Activated CD8-positive, alpha-beta T cell treated with anti-CD3 and anti-CD28 coated beads for 36 hours (primary cell): ENCODE measurements at regions of chr6 and their contacts with region 1.

Region 1: DNA sequence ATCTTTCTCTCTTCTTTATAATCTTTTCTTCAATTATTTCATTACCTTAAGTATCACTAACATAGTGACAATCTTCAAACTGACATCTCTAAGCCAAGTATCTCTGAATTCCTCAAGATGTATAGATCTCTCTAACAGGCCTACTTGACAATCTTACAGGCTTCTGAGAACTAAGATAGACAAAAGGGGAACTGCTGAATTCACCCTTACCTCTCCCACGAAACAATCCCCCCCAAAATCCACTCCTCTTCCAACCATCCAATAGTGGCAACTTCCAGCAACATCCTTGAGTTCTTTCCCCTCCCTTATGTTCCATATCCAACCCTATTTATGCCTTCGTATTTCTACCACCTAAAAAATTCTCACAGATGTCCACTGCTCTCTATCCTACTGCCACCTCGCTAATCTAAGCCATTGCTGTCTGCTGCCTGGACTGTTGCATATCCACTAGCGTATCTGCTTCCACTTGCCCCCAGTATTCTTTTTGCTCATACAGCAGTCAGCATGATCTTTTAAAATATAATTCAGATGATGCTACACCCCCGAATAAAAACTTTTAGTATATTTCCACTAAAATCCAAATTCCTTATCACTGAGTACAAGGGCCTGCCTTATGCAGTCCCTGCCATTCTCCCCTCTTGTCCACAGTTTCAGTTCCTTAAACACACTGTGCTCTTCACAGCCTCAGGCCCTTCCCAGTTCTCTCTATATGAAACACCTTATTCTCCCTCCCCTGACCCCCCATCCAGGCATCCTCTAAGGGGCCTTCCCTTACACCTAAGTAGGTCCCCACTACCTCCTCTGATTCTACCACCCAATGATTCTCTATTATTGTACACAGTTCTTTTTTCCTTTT is 8.0 kb downstream of the REPS1 start:
- DNase-seq: no peak
- ATAC-seq: no peak
- H3K4me3 Mint-ChIP-seq: no peak overlapping the region
- H3K27ac Mint-ChIP-seq: no peak overlapping the region
- H3K4me1 Mint-ChIP-seq: peaks cover 48% of the 10 kb centered on the region
- H3K27me3 Mint-ChIP-seq: no peaks in the 10 kb centered on the region
- CTCF ChIP-seq: no peak

Region 2: DNA sequence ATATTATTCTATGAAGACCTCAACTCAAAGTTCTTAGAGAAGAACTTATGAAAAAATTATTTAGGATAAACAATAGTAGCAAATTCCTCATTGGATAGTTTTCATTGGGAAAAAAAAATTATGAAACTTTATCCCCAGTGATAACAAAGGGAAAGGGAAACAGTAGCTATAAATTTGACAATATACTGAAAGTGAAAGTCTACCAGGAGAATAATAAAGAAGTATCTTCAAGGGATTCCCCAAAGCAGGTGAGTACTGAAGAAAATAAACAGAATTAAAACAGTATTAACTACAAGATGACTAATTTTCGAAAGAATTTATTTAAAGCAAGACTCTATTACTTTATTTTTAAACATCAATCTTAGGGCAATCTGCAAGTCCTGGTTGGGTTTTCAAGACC is 48.4 kb before region 1 on chr6:
- CTCF ChIA-PET with region 1: no interaction called
- POLR2A ChIA-PET with region 1: no interaction called
- intact Hi-C with region 1: loop called (anchors 5 kb)
- DNase-seq: no peak
- ATAC-seq: no peak
- H3K4me3 Mint-ChIP-seq: no peak overlapping the region
- H3K27ac Mint-ChIP-seq: no peak overlapping the region
- H3K4me1 Mint-ChIP-seq: peaks cover 10% of the 10 kb centered on the region
- H3K27me3 Mint-ChIP-seq: no peaks in the 10 kb centered on the region
- CTCF ChIP-seq: no peak

Region 3: GRCh38 chr6:139973669-139974344 is 993.8 kb after region 1 on chr6:
- CTCF ChIA-PET with region 1: no interaction called
- POLR2A ChIA-PET with region 1: no interaction called
- intact Hi-C with region 1: no loop called
- DNase-seq: no peak
- ATAC-seq: no peak
- H3K4me3 Mint-ChIP-seq: no peak overlapping the region
- H3K27ac Mint-ChIP-seq: no peak overlapping the region
- H3K4me1 Mint-ChIP-seq: no peaks in the 10 kb centered on the region
- H3K27me3 Mint-ChIP-seq: peaks cover 21% of the 10 kb centered on the region
- CTCF ChIP-seq: no peak